Calu3 (cell line): ENCODE measurements at regions of chr9 and their contacts with region 1.

Region 1: GRCh38 chr9:12640016-12640587 is 53.1 kb upstream of the TYRP1 start:
- DNase-seq: no peak
- H3K4me3 Mint-ChIP-seq: no peak overlapping the region
- H3K27ac Mint-ChIP-seq: no peak overlapping the region
- H3K4me1 Mint-ChIP-seq: no peaks in the 10 kb centered on the region
- H3K27me3 Mint-ChIP-seq: peaks cover 20% of the 10 kb centered on the region
- CTCF ChIP-seq: peak; percentile 20

Region 2: DNA sequence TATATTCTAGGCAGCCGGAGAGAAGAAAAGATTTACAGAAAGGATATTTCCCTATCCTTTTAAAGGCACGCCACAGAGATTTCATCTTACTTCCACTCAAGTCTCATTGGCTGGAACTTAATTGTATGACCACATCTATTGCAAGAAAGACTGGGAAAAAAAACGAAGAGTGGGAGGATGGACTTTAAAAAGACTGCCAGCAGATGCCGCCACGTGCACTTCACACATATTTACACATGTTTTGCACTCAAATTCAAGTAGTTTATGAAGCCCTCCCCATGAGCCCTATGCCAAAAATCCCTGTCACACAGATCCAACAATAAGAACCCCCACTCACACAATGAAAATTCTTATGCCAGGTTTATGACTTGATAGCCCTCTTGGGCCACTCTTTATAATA is 85.5 kb before region 1 on chr9:
- CTCF ChIA-PET with region 1: interaction called, 3 read pairs
- intact Hi-C with region 1: loop called (anchors 2 kb)
- DNase-seq: peak; percentile 1
- H3K4me3 Mint-ChIP-seq: no peak overlapping the region
- H3K27ac Mint-ChIP-seq: no peak overlapping the region
- H3K4me1 Mint-ChIP-seq: no peaks in the 10 kb centered on the region
- H3K27me3 Mint-ChIP-seq: no peaks in the 10 kb centered on the region
- CTCF ChIP-seq: no peak